Right lobe of liver (tissue), 6 donors: ENCODE measurements at regions of chr9 and their contacts with region 1.

Region 1: DNA sequence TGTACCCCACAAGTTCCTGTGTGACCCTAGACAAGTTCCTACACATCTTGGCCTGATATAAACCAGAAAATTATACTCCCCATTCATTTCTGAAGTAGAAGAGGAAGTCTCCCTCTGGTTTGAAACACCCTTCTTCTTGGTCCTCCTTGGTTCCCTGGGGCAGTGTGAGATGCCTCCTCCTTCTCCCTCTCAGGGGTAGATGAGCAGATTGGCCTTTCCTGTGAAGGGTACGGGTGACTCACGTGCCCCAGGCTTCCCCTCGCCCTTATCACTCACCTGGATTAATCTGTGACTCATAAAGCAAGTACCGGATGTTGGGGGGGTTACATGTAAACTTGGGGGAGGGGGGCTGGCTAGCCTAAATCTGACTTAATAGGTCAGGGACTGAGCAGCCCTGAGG is 11.1 kb upstream of the AQP3 start:
- DNase-seq: no peak
- ATAC-seq: peak in 1 of 4 donors; percentile 59
- H3K4me3 ChIP-seq: no peak overlapping the region
- H3K27ac ChIP-seq: no peak overlapping the region
- H3K4me1 ChIP-seq: peaks cover 0 to 11% (median 2%) of the 10 kb centered on the region in 4 donors
- H3K27me3 ChIP-seq: no peaks in the 10 kb centered on the region
- CTCF ChIP-seq: no peak
- POLR2A ChIP-seq: no peak

Region 2: GRCh38 chr9:33414914-33415500 is 43.4 kb before region 1 on chr9:
- intact Hi-C with region 1: loop called in 1 of 2 experiments (anchors 5 kb)
- DNase-seq: no peak
- ATAC-seq: no peak
- H3K4me3 ChIP-seq: no peak overlapping the region
- H3K27ac ChIP-seq: peak overlapping the region in 2 of 3 donors; percentile 53
- H3K4me1 ChIP-seq: peaks cover 0 to 18% (median 8%) of the 10 kb centered on the region in 4 donors
- H3K27me3 ChIP-seq: no peaks in the 10 kb centered on the region
- CTCF ChIP-seq: no peak
- POLR2A ChIP-seq: no peak